HepG2 (cell line): ENCODE measurements at regions of chr15 and their contacts with region 1.

Region 1: DNA sequence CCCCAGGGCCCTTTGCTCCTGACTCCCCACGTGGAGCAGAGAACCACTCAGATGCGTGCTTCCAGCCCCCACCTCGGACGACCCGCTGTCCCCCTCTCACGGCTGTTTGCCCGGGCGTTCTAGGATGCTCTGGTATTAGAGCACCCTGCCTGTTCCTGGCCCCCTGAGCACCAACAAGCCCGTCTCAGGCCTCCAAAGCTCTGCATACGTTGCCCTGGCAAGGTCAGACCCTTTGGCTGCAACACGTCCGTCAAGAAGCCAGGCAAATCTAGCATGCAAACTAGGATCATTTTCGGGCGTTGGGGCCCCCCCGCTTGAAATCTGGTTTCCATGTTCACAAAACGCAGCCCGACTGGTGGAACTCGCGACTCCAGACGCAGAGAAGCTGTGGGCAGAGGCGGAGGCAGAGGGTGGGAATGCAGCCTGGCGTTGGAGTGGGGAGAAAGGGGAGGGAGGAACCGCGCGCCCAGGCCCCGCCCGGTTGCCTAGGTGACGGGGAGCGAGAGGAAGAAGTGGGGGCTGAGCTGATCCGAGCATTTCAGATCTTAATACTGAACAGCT is 86.2 kb upstream of the PIAS1 start:
- DNase-seq: no peak
- ATAC-seq: no peak
- H3K4me3 ChIP-seq: no peak overlapping the region
- H3K27ac ChIP-seq: no peak overlapping the region
- H3K4me1 ChIP-seq: peaks cover 12% of the 10 kb centered on the region
- H3K27me3 ChIP-seq: no peaks in the 10 kb centered on the region
- CTCF ChIP-seq: no peak
- EP300 ChIP-seq: no peak
- POLR2A ChIP-seq: no peak
- RAD21 ChIP-seq: no peak

Region 2: GRCh38 chr15:67884514-67885487 is 83.2 kb before region 1 on chr15:
- CTCF ChIA-PET with region 1: no interaction called
- POLR2A ChIA-PET with region 1: no interaction called
- in situ Hi-C with region 1: no loop called
- intact Hi-C with region 1: loop called (anchors 5 kb)
- DNase-seq: peak; percentile 89
- ATAC-seq: peak; percentile 96
- H3K4me3 ChIP-seq: peak overlapping the region; percentile 43 to 60 (median 54); a peak in 5 of 6 replicates
- H3K27ac ChIP-seq: peak overlapping the region; percentile 81
- H3K4me1 ChIP-seq: peaks cover 60% of the 10 kb centered on the region
- H3K27me3 ChIP-seq: no peaks in the 10 kb centered on the region
- CTCF ChIP-seq: no peak
- EP300 ChIP-seq: peak; percentile 70 to 93; a peak in 3 of 4 replicates
- POLR2A ChIP-seq: peak; percentile 47 to 52; a peak in 3 of 4 replicates
- RAD21 ChIP-seq: no peak; the same call in 1 of the 2 replicates

Region 3: DNA sequence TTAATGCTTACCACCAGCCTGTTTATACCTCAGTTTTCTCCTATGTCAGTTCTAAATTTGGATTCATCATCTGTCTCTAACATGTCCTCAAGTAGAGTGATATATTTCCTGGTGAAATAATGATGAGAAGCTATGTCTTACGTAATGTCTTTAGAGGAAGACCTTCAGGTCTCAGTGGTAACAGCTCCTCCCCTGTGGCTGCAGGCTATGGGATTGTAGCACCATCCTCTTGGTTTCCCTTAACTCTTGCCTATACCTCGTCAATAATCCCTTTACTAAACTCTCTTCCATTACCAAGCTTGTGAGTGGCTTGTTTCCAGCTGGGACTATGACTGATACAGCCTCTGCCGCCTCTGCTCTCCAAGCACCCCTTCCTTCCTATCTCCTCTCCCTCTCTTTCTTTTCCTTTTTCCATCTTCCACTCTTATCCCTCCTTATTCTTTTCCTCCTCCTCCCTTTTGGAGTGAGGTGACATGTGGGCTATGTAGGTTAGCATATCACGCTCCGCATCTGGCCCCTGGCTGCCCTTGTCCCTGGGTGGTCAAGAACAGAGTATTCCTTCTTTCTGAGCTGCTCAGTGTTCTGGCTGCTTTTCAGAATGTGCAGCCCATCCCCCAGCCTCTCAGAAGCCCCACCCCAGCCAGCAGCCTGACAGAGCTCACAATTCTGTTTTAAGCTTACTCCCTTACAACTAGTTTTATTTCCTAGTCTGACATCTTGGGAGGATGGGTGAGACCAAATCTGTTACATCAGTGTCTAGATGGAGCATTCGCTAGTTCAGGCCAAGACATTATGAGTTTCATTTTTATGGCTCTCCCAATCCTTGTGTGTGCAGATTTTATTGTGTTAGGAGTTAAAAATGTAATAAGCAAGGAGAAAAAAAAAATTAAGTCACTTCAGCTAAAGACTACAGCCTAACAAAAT is 53.2 kb before region 1 on chr15:
- CTCF ChIA-PET with region 1: no interaction called
- POLR2A ChIA-PET with region 1: no interaction called
- in situ Hi-C with region 1: no loop called
- intact Hi-C with region 1: loop called (anchors 5 kb)
- DNase-seq: peak; percentile 65
- ATAC-seq: peak; percentile 73
- H3K4me3 ChIP-seq: peak overlapping the region; percentile 19 to 51 (median 35)
- H3K27ac ChIP-seq: peak overlapping the region; percentile 89
- H3K4me1 ChIP-seq: peaks cover 75% of the 10 kb centered on the region
- H3K27me3 ChIP-seq: no peaks in the 10 kb centered on the region
- CTCF ChIP-seq: no peak
- EP300 ChIP-seq: no peak
- POLR2A ChIP-seq: no peak; a peak in 1 of 4 replicates
- RAD21 ChIP-seq: no peak